Activated CD8-positive, alpha-beta T cell treated with anti-CD3 and anti-CD28 coated beads, Interleukin-2, amount 10 ng/mL, durations not matched to agents 7 days and 5 days (primary cell): ENCODE measurements at regions of chr13 and their contacts with region 1.

Region 1: DNA sequence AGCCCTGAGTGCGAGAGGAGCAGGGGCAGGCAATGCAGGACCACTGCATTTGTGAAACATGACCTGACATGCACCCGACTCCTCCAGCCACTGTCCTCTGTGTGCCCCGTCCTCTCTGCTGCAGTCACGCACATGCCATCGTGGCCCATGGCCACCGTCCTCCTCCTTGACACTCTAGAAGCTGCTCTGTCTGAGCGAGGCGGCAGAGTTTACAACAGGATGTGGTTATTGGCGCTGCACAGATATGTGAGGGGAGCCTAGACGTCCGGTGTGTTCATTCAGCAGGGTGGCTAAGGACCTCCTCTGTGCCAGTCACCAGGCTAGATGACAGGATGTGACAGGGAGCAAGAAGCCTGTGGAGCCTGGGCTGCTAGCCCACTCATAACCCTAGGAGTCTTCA is 277.8 kb downstream of the FOXO1 start:
- DNase-seq: peak; percentile 95
- ATAC-seq: peak; percentile 97
- H3K4me3 Mint-ChIP-seq: peak overlapping the region; percentile 74
- H3K27ac Mint-ChIP-seq: peak overlapping the region; percentile 97
- H3K4me1 Mint-ChIP-seq: peaks cover 57% of the 10 kb centered on the region
- H3K27me3 Mint-ChIP-seq: no peaks in the 10 kb centered on the region

Region 2: GRCh38 chr13:40069173-40070044 is 319.2 kb before region 1 on chr13:
- CTCF ChIA-PET with region 1: interaction called, 10 read pairs
- POLR2A ChIA-PET with region 1: no interaction called
- DNase-seq: peak; percentile 77
- ATAC-seq: peak; percentile 90
- H3K4me3 Mint-ChIP-seq: no peak overlapping the region
- H3K27ac Mint-ChIP-seq: no peak overlapping the region
- H3K4me1 Mint-ChIP-seq: peaks cover 25% of the 10 kb centered on the region
- H3K27me3 Mint-ChIP-seq: no peaks in the 10 kb centered on the region

Region 3: GRCh38 chr13:40190641-40191100 is 197.9 kb before region 1 on chr13:
- CTCF ChIA-PET with region 1: interaction called, 5 read pairs
- POLR2A ChIA-PET with region 1: interaction called, 10 read pairs
- DNase-seq: peak; percentile 87
- ATAC-seq: peak; percentile 30
- H3K4me3 Mint-ChIP-seq: peak overlapping the region; percentile 40
- H3K27ac Mint-ChIP-seq: peak overlapping the region; percentile 98
- H3K4me1 Mint-ChIP-seq: peaks cover 64% of the 10 kb centered on the region
- H3K27me3 Mint-ChIP-seq: no peaks in the 10 kb centered on the region

Region 4: DNA sequence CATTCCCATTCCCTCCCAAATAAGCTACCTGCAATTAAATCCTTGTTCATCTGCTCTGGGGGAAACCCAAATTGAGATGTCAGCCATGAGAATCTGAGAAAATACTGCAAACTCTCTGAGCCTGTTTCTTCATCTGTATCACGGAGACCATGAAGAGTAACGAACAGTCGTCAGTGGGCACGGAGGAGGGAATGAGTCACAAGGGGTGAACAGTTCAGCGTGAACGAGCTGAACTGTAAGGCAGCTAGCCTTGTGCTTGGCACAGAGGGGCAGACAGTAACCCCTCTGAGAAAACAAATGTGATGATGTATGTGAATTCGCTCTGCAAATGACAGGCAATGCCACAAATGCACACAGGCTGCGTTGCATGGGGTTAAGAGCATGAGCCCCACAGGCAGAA is 10.8 kb before region 1 on chr13:
- CTCF ChIA-PET with region 1: interaction called, 3 read pairs
- POLR2A ChIA-PET with region 1: interaction called, 15 read pairs
- DNase-seq: no peak
- ATAC-seq: no peak
- H3K4me3 Mint-ChIP-seq: no peak overlapping the region
- H3K27ac Mint-ChIP-seq: no peak overlapping the region
- H3K4me1 Mint-ChIP-seq: peaks cover 27% of the 10 kb centered on the region
- H3K27me3 Mint-ChIP-seq: no peaks in the 10 kb centered on the region

Region 5: GRCh38 chr13:40433577-40433976 is 45.0 kb after region 1 on chr13:
- CTCF ChIA-PET with region 1: interaction called, 3 read pairs
- POLR2A ChIA-PET with region 1: interaction called, 11 read pairs
- DNase-seq: peak; percentile 77
- ATAC-seq: peak; percentile 60
- H3K4me3 Mint-ChIP-seq: peak overlapping the region; percentile 27
- H3K27ac Mint-ChIP-seq: peak overlapping the region; percentile 76
- H3K4me1 Mint-ChIP-seq: peaks cover 54% of the 10 kb centered on the region
- H3K27me3 Mint-ChIP-seq: no peaks in the 10 kb centered on the region